HEK293T (cell line): ENCODE measurements at regions of chr10 and their contacts with region 1.

Region 1: DNA sequence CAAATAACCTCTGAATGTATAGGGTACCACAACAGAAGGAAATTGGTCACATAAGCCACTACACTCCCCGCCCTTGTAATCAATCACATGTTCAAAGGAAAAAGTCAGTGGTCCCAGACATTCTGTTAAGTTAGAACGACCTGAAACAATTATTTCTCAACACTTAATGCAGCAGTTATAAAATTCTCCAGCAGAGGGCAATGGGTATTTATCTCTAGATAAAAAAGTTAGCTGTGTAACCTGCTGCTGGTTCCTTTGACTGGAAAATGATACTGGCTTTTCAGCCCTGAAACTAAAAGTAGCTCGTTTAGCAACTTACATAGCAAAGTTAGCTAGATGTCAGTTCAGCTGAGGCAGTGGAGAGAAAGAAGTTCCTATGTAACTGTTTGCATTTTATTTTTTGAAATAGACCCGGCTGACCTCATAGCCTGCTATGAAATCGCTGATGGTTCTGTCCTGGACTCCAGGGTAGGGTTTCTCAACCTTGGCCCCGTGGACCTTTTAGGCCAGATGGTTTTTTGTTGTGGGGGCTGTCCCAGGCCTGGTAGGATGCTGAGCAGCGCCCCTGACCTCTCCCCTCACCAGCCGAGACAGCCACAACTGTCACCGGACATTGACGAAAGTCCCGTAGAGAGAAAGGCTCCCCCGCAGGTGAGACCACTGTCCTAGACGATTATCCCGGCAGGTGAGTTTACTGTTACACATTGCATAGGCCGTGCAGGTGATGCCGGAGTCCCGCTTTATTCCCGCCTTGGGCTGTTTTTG is 40.2 kb upstream of the PROSER2 start:
- DNase-seq: peak; percentile 49

Region 2: DNA sequence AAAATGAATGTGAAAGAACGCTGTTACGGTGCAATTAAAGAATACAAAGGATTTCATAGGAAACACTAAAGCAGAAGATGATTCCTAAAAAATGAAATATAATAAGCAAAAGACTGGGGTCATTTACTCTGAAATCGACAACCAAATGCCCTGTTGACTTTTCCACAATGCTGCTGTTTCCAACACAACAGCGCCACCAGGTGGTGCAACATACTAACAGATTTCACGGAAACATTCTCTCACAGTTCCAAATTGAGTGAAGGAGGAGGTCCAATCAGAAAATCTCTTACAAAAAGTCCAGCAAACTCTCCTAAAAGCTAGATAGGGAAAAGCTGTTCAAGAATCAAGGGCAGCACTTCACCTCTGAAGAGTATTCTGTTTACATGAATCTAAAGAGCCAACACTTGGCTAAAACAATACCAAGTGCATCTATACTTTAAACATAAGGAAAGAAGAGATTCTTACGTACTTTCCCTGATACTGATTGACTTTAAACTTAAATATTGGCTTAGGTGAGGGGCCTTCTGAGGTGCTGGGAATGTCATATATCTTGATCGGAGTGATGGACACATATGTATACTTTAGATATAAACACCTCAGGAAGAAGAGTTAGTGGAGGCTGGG is 203.7 kb after region 1 on chr10:
- CTCF ChIA-PET with region 1: interaction called, 10 read pairs
- POLR2A ChIA-PET with region 1: no interaction called
- DNase-seq: peak; percentile 82